WTC11 (cell line): ENCODE measurements at regions of chr2 and their contacts with region 1.

Region 1: DNA sequence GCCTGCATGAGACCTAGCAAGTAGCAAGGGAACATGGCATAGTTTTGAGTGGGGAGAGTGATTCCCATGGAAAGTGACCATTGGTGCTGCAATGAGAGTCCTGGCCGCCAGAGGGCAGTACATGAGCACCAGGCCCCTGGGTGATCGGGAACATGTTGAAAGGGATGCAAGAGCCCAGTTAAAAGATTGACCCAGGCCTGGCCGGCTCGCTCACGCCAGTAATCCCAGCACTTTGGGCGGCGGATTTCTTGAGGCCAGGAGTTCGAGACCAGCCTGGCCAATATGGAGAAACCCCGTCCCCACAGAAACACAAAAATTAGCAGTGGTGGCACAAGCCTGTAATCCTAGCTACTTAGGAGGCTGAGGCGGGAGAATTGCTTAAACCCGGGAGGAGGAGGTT is 22.2 kb downstream of the FAP start:
- DNase-seq: peak; percentile 90
- ATAC-seq: peak; percentile 98
- H3K4me3 Mint-ChIP-seq: no peak overlapping the region
- H3K27ac Mint-ChIP-seq: peak overlapping the region; percentile 73; the same call in 1 of the 2 replicates
- H3K4me1 Mint-ChIP-seq: peaks cover 18% of the 10 kb centered on the region
- H3K27me3 Mint-ChIP-seq: no peaks in the 10 kb centered on the region
- CTCF ChIP-seq: peak; percentile 83

Region 2: GRCh38 chr2:161946489-161947107 is 274.5 kb before region 1 on chr2:
- CTCF ChIA-PET with region 1: no interaction called
- POLR2A ChIA-PET with region 1: no interaction called
- DNase-seq: no peak
- ATAC-seq: peak; percentile 22; the same call in 1 of the 2 replicates
- H3K4me3 Mint-ChIP-seq: no peak overlapping the region
- H3K27ac Mint-ChIP-seq: no peak overlapping the region
- H3K4me1 Mint-ChIP-seq: peaks cover 10% of the 10 kb centered on the region
- H3K27me3 Mint-ChIP-seq: no peaks in the 10 kb centered on the region
- CTCF ChIP-seq: no peak

Region 3: GRCh38 chr2:162153608-162154224 is 67.3 kb before region 1 on chr2:
- CTCF ChIA-PET with region 1: interaction called, 10 read pairs
- POLR2A ChIA-PET with region 1: no interaction called
- DNase-seq: peak; percentile 65
- ATAC-seq: peak; percentile 96
- H3K4me3 Mint-ChIP-seq: no peak overlapping the region
- H3K27ac Mint-ChIP-seq: no peak overlapping the region
- H3K4me1 Mint-ChIP-seq: peaks cover 10% of the 10 kb centered on the region
- H3K27me3 Mint-ChIP-seq: no peaks in the 10 kb centered on the region
- CTCF ChIP-seq: peak; percentile 64

Region 4: DNA sequence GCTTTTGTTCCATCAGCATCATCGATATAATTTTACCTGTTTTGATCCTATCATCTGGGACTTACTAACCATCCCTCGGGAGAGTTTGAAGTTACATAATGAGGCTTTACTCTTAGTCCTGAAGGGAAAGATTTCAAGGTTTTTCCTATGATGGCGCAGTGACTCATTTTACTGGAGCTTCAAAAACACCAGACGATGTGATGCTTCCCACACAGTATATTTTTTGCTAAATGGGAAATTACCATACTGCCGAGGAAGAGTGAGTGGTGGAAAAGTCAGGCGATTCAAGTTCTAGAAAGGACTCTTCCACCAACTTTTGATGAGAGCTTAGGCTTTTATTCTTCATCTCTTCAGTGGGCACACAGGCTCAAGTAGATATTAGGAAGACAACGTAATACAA is 24.4 kb before region 1 on chr2:
- CTCF ChIA-PET with region 1: no interaction called
- POLR2A ChIA-PET with region 1: no interaction called
- DNase-seq: no peak
- ATAC-seq: no peak
- H3K4me3 Mint-ChIP-seq: no peak overlapping the region
- H3K27ac Mint-ChIP-seq: no peak overlapping the region
- H3K4me1 Mint-ChIP-seq: no peaks in the 10 kb centered on the region
- H3K27me3 Mint-ChIP-seq: no peaks in the 10 kb centered on the region
- CTCF ChIP-seq: no peak

Region 5: GRCh38 chr2:162233197-162233596 is 12.1 kb after region 1 on chr2:
- CTCF ChIA-PET with region 1: no interaction called
- POLR2A ChIA-PET with region 1: no interaction called
- DNase-seq: no peak
- ATAC-seq: no peak
- H3K4me3 Mint-ChIP-seq: no peak overlapping the region
- H3K27ac Mint-ChIP-seq: no peak overlapping the region
- H3K4me1 Mint-ChIP-seq: peaks cover 12% of the 10 kb centered on the region
- H3K27me3 Mint-ChIP-seq: no peaks in the 10 kb centered on the region
- CTCF ChIP-seq: no peak